ENCODE measurements at regions of chr2 and their contacts with region 1.

Region 1: GRCh38 chr2:108637304-108637669 is 82.0 kb upstream of the RANBP2 start:
- DNase-seq: peak; percentile 46
- ATAC-seq: peak; percentile 72
- H3K4me3 ChIP-seq: no peak overlapping the region
- H3K27ac ChIP-seq: peak overlapping the region; percentile 6; the same call in 1 of the 2 replicates
- H3K4me1 ChIP-seq: peaks cover 20% of the 10 kb centered on the region
- H3K27me3 ChIP-seq: no peaks in the 10 kb centered on the region
- CTCF ChIP-seq: no peak
- EP300 ChIP-seq: peak; percentile 54 to 58
- POLR2A ChIP-seq: no peak
- RAD21 ChIP-seq: no peak

Region 2: GRCh38 chr2:108351889-108352288 is 285.4 kb before region 1 on chr2:
- CTCF ChIA-PET with region 1: interaction called, 4 read pairs
- POLR2A ChIA-PET with region 1: no interaction called
- RAD21 ChIA-PET with region 1: no interaction called
- SMC1A ChIA-PET with region 1: interaction called, 4 read pairs
- in situ Hi-C with region 1: no loop called
- intact Hi-C with region 1: loop called (anchors 5 kb)
- DNase-seq: no peak
- ATAC-seq: no peak
- H3K4me3 ChIP-seq: no peak overlapping the region
- H3K27ac ChIP-seq: no peak overlapping the region
- H3K4me1 ChIP-seq: no peaks in the 10 kb centered on the region
- H3K27me3 ChIP-seq: peaks cover 0 to under 1% of the 10 kb centered on the region in 2 experiments; a peak in 1 of 4 replicates
- CTCF ChIP-seq: no peak
- EP300 ChIP-seq: no peak
- POLR2A ChIP-seq: no peak
- RAD21 ChIP-seq: no peak

Region 3: DNA sequence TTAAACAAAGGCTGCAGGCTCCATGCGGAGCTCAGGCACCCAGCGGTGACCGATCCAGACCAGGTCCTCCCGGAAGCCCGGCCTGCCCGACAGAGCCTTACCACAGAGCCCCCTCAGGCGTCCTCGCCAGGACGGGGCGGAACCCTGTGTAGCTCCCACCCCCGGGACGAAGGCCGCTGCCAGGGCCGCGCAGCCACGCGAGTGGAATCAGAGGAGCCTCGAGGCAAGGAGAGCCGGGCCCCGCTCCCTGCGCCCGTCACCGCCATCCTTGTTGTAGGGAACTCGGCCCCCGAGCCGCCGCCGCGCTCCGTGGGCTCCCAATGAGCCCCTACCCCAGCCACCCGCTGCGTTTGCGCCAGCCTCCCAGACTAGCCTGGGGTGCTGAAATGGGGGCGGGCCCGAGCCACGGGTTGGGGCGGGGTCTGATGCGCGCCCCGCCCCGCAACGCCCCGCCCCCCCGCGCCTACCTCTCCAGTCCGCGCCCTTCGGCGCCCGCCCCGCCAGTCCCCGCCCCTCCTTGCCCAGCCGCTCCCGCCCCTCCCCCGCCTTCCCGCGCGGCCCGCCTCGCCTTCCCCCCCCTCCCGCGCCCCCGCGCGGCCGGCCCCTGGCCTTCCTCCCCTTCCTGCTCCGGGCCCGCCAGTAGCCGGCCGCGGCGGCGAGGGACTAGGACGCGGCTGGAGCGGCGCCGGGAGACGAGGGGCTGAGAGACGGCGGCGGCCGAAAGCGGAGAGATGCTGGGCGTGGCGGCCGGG is 103.3 kb before region 1 on chr2 and contains the start of gene LIMS1:
- CTCF ChIA-PET with region 1: interaction called, 8 read pairs
- POLR2A ChIA-PET with region 1: interaction called, 13 read pairs
- RAD21 ChIA-PET with region 1: interaction called, 11 read pairs
- SMC1A ChIA-PET with region 1: interaction called, 10 read pairs
- in situ Hi-C with region 1: no loop called
- intact Hi-C with region 1: loop called (anchors 5 kb)
- DNase-seq: peak; percentile 50
- ATAC-seq: peak; percentile 94
- H3K4me3 ChIP-seq: peak within 1 kb of the TSS; percentile 85
- H3K27ac ChIP-seq: peak within 1 kb of the TSS; percentile 66
- H3K4me1 ChIP-seq: no peaks in the 10 kb centered on the region; the same call in 1 of the 2 replicates
- H3K27me3 ChIP-seq: no peaks in the 10 kb centered on the region
- CTCF ChIP-seq: 0 out of 6 replicates have a peak, but pooled peaks of 1 of the 3 experiments have one; percentile 7
- EP300 ChIP-seq: no peak
- POLR2A ChIP-seq: peak; percentile 93
- RAD21 ChIP-seq: 0 out of 2 replicates have a peak, but pooled peaks have one; percentile 9
- polyA plus RNA-seq, gene LIMS1: 15.7 to 17.6 TPM

Region 4: GRCh38 chr2:108565778-108566375 is 71.4 kb before region 1 on chr2:
- CTCF ChIA-PET with region 1: interaction called, 12 read pairs
- POLR2A ChIA-PET with region 1: no interaction called
- RAD21 ChIA-PET with region 1: interaction called, 7 read pairs
- SMC1A ChIA-PET with region 1: interaction called, 5 read pairs
- in situ Hi-C with region 1: no loop called
- intact Hi-C with region 1: no loop called
- DNase-seq: no peak
- ATAC-seq: peak; percentile 91
- H3K4me3 ChIP-seq: peak overlapping the region; percentile 53; the same call in 1 of the 2 replicates
- H3K27ac ChIP-seq: peak overlapping the region; percentile 75
- H3K4me1 ChIP-seq: peaks cover 9% of the 10 kb centered on the region
- H3K27me3 ChIP-seq: no peaks in the 10 kb centered on the region
- CTCF ChIP-seq: no peak
- EP300 ChIP-seq: no peak
- POLR2A ChIP-seq: no peak
- RAD21 ChIP-seq: no peak

Region 5: DNA sequence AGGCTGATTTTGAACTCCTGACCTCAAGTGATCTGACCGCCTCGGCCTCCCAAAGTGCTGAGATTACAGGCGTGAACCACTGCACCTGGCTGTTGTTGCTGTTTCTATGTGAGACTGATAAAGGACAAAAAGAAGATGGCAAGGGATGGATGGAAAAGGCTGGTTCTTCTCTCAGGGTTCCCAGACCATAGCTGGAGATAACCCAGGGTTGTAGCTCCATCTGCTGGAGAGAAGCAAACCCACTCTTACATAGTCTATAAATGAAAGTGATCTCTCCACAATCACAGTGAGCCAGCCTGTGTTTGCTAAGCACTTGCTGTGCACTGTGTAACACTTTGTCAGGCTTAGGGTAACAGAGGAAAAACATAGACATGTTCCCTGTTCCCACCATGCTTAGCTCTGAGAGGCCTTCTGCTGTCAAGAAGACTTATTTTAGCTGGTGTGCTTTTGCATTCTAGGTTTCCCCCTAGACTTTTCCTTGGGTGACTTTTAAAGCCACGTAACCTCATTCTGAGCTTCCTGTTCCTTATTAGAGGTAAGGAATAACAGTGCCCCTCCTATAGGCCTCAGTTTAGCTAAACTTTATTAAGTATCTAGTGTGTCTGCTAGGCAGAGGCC is 53.3 kb before region 1 on chr2:
- CTCF ChIA-PET with region 1: interaction called, 118 read pairs
- POLR2A ChIA-PET with region 1: interaction called, 3 read pairs
- RAD21 ChIA-PET with region 1: interaction called, 44 read pairs
- SMC1A ChIA-PET with region 1: interaction called, 89 read pairs
- in situ Hi-C with region 1: no loop called
- intact Hi-C with region 1: no loop called
- DNase-seq: no peak
- ATAC-seq: peak; percentile 82
- H3K4me3 ChIP-seq: no peak overlapping the region
- H3K27ac ChIP-seq: no peak overlapping the region
- H3K4me1 ChIP-seq: peaks cover 43% of the 10 kb centered on the region
- H3K27me3 ChIP-seq: no peaks in the 10 kb centered on the region
- CTCF ChIP-seq: peak; percentile 66 to 89 (median 76)
- EP300 ChIP-seq: no peak
- POLR2A ChIP-seq: no peak
- RAD21 ChIP-seq: peak; percentile 92

Region 6: DNA sequence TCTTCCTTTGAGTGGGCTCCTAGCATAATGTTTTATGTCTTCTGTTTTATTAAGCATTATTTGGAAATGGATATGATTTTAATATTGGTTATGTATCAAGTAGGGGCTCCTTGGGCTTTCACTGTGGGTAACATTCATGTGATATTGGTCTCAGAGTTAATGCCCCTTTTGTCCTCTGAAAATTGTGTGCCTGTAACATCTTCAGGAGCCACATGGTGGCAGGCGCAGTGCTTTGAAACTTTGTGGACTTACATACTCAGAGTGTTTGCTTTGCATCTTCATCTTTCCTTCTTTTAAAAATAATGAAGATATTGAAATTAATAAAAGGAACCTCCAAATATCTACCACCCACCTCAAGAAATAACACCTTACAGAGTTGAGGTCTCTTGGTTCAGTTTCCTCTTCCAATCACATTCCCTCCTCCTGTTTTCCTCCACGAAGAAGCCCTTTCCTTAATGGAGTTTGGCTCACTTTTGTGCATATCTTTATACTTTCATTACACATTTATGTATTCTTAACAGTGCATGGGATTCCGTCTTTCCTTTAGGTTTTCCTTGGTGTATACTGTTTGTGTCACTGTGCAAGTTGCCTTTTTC is 29.5 kb before region 1 on chr2:
- CTCF ChIA-PET with region 1: interaction called, 441 read pairs
- POLR2A ChIA-PET with region 1: interaction called, 51 read pairs
- RAD21 ChIA-PET with region 1: interaction called, 441 read pairs
- SMC1A ChIA-PET with region 1: interaction called, 800 read pairs
- in situ Hi-C with region 1: no loop called
- intact Hi-C with region 1: loop called (anchors 1 kb)
- DNase-seq: no peak
- ATAC-seq: peak; percentile 17; the same call in 1 of the 3 replicates
- H3K4me3 ChIP-seq: no peak overlapping the region
- H3K27ac ChIP-seq: no peak overlapping the region
- H3K4me1 ChIP-seq: peaks cover 47% of the 10 kb centered on the region
- H3K27me3 ChIP-seq: no peaks in the 10 kb centered on the region
- CTCF ChIP-seq: peak; percentile 67 to 80 (median 74)
- EP300 ChIP-seq: no peak
- POLR2A ChIP-seq: no peak
- RAD21 ChIP-seq: peak; percentile 93

Region 7: DNA sequence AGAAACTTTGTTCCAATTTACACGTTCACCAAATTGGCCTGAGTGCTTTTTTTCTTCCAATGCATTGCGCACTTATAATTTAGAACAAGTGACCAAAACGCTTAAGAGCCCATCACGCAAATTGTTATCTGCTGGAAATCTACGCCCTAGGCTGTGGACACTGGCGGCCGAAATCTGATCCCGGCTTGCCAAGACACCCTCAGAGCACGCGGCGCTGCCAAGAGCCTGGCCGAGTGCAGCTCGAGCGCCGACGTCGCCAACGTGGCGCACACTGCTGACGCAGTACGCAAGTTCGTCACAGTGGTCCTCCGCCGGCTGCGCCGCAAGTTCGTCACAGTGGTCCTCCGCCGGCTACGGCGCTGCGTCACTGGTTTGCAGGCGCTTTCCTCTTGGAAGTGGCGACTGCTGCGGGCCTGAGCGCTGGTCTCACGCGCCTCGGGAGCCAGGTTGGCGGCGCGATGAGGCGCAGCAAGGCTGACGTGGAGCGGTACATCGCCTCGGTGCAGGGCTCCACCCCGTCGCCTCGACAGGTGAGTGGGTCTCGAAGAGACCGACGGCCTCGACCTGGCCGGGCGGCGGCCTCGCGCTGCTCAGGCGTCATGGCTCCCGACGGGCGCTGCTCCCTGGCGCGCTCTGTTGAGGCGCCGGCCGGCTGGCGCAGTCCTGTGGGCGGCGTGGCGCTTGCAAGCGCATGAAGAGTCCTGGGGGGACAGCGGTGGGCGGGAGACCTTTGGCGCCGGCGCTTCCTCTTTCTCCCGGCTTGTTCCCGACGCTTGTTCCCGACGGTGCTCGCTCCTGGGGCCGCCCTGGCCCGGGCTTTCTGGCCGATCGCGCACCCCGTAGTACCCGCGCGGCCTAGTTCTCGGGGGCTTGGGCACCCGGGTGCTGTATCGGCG is 82.1 kb after region 1 on chr2 and contains the start of gene RANBP2:
- CTCF ChIA-PET with region 1: interaction called, 3 read pairs
- POLR2A ChIA-PET with region 1: interaction called, 3 read pairs
- RAD21 ChIA-PET with region 1: interaction called, 15 read pairs
- SMC1A ChIA-PET with region 1: interaction called, 6 read pairs
- in situ Hi-C with region 1: no loop called
- intact Hi-C with region 1: no loop called
- DNase-seq: peak; percentile 81
- ATAC-seq: peak; percentile 96
- H3K4me3 ChIP-seq: peak within 1 kb of the TSS; percentile 79
- H3K27ac ChIP-seq: peak within 1 kb of the TSS; percentile 81
- H3K4me1 ChIP-seq: no peaks in the 10 kb centered on the region
- H3K27me3 ChIP-seq: no peaks in the 10 kb centered on the region
- CTCF ChIP-seq: no peak
- EP300 ChIP-seq: no peak
- POLR2A ChIP-seq: peak; percentile 97
- RAD21 ChIP-seq: no peak
- polyA plus RNA-seq, gene RANBP2: 9.0 to 9.2 TPM

Region 8: DNA sequence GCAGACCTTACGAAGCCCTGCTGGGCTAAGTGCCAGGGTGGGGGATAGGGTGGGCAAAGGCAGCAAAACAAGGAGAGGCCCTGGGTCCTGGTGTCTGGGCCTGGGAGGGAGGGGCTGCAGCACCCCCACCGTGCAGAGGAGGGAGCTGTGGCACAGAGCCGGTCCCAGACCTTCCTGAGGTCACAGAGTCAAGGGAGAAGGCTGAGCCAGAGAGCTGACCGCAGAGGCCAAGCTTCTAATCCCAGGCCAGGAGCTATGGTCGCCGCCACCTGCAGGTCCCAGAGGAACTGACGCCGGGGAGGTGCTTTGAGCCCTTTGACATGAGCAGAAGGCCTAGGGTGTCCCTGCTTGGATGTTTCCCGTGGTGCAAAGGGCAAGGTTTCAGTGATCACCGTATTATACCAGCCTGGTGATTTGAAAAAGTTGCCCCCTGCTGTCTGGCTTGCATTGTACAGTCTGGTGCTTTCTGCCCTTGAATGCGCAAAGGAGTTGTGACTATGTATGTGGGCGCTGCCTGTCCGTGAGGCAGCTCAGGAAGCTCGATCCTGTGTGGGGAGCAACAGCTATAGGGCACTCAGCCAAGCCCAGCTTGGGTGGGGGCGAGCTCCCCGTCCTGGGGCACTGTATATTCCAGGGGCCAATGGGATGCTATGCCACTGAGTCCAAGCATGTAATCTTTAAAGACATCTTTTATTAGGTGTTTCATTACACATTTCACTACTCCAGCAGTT is 307.5 kb after region 1 on chr2:
- CTCF ChIA-PET with region 1: no interaction called
- POLR2A ChIA-PET with region 1: no interaction called
- RAD21 ChIA-PET with region 1: no interaction called
- SMC1A ChIA-PET with region 1: no interaction called
- in situ Hi-C with region 1: no loop called
- intact Hi-C with region 1: no loop called
- DNase-seq: no peak
- ATAC-seq: no peak
- H3K4me3 ChIP-seq: no peak overlapping the region
- H3K27ac ChIP-seq: no peak overlapping the region
- H3K4me1 ChIP-seq: no peaks in the 10 kb centered on the region
- H3K27me3 ChIP-seq: no peaks in the 10 kb centered on the region
- CTCF ChIP-seq: no peak
- EP300 ChIP-seq: no peak
- POLR2A ChIP-seq: no peak
- RAD21 ChIP-seq: no peak